ENCODE measurements at regions of chr1 and their contacts with region 1.

Region 1: DNA sequence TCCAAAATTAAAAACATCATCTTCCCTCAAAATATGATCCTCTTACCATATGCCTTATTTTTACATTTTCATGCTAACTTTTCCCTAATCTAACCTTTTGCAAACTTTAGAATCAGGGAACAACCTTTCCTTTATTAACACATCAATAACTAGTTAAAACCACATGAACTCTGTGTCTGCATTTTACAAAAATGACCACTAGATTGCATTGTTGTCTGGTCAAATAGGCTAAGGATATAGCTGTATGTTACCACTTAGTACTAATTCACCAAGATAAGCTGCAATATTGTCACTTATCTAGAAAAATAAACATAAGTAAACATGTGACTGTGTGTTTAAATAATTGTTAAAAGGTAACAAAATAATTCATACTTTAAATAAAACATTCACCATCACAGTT is 82.3 kb downstream of the DENND1B start:
- DNase-seq: peak in 1 of 4 experiments; percentile 17
- ATAC-seq: peak; percentile 80
- H3K4me3 ChIP-seq: no peak overlapping the region
- H3K27ac ChIP-seq: no peak overlapping the region
- H3K4me1 ChIP-seq: no peaks in the 10 kb centered on the region
- H3K27me3 ChIP-seq: no peaks in the 10 kb centered on the region
- CTCF ChIP-seq: peak in 2 of 3 experiments; percentile 25 to 60; a peak in 3 of 6 replicates
- EP300 ChIP-seq: no peak
- POLR2A ChIP-seq: no peak
- RAD21 ChIP-seq: peak; percentile 72 to 82

Region 2: GRCh38 chr1:197207081-197207480 is 485.9 kb before region 1 on chr1:
- CTCF ChIA-PET with region 1: no interaction called
- POLR2A ChIA-PET with region 1: no interaction called
- in situ Hi-C with region 1: no loop called
- intact Hi-C with region 1: no loop called
- DNase-seq: no peak
- ATAC-seq: no peak
- H3K4me3 ChIP-seq: no peak overlapping the region
- H3K27ac ChIP-seq: no peak overlapping the region
- H3K4me1 ChIP-seq: no peaks in the 10 kb centered on the region
- H3K27me3 ChIP-seq: no peaks in the 10 kb centered on the region
- CTCF ChIP-seq: no peak
- EP300 ChIP-seq: no peak
- POLR2A ChIP-seq: no peak
- RAD21 ChIP-seq: no peak

Region 3: GRCh38 chr1:197486946-197487345 is 206.0 kb before region 1 on chr1:
- CTCF ChIA-PET with region 1: no interaction called
- POLR2A ChIA-PET with region 1: no interaction called
- in situ Hi-C with region 1: no loop called
- intact Hi-C with region 1: no loop called
- DNase-seq: peak in 1 of 4 experiments; percentile 21
- ATAC-seq: peak; percentile 42
- H3K4me3 ChIP-seq: no peak overlapping the region
- H3K27ac ChIP-seq: no peak overlapping the region
- H3K4me1 ChIP-seq: no peaks in the 10 kb centered on the region
- H3K27me3 ChIP-seq: peaks cover 0 to 6% of the 10 kb centered on the region in 2 experiments; a peak in 2 of 5 replicates
- CTCF ChIP-seq: no peak
- EP300 ChIP-seq: no peak
- POLR2A ChIP-seq: no peak
- RAD21 ChIP-seq: no peak

Region 4: DNA sequence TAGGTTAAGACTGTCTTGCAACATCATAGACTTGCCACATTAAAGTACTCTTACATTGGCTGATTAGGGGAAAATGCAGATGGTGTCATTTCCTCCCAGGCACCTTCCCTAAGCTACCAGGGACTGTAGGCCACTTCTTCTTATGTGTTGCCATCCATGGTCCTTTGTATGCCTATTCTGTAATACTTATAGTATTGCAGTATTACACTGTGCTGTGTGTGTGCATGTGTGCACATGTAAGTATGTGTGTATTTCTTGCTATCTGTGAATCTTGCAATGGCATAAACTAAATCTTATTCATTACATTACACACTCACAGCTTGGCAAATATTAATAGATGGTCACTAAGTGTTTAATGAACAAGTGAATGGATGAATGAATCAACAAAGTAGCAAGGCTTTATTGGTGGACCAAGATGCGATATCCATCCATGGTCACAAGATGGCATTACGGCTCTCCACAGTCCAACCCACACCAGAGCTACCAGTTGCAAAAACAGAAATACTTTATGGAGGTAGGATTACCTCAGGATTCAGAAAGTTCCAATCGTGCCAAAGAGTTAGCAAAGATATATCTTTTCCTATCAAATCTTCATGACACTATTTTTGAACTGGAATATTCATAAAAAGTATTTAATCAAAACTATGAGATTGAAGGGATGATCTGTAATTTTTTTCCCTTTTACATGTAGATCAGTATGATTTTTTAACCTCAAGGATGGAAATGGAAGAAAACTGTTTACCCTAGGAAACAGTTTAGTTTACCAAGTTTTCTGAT is 77.9 kb before region 1 on chr1:
- CTCF ChIA-PET with region 1: no interaction called
- POLR2A ChIA-PET with region 1: no interaction called
- in situ Hi-C with region 1: no loop called
- intact Hi-C with region 1: loop called (anchors 5 kb)
- DNase-seq: peak in 2 of 4 experiments; percentile 18 to 62
- ATAC-seq: peak; percentile 95
- H3K4me3 ChIP-seq: no peak overlapping the region
- H3K27ac ChIP-seq: no peak overlapping the region
- H3K4me1 ChIP-seq: no peaks in the 10 kb centered on the region
- H3K27me3 ChIP-seq: no peaks in the 10 kb centered on the region
- CTCF ChIP-seq: peak; percentile 63 to 74 (median 67)
- EP300 ChIP-seq: no peak
- POLR2A ChIP-seq: no peak
- RAD21 ChIP-seq: peak; percentile 85 to 88